Right cardiac atrium (tissue), 5 donors: ENCODE measurements at regions of chr14 and their contacts with region 1.

Region 1: DNA sequence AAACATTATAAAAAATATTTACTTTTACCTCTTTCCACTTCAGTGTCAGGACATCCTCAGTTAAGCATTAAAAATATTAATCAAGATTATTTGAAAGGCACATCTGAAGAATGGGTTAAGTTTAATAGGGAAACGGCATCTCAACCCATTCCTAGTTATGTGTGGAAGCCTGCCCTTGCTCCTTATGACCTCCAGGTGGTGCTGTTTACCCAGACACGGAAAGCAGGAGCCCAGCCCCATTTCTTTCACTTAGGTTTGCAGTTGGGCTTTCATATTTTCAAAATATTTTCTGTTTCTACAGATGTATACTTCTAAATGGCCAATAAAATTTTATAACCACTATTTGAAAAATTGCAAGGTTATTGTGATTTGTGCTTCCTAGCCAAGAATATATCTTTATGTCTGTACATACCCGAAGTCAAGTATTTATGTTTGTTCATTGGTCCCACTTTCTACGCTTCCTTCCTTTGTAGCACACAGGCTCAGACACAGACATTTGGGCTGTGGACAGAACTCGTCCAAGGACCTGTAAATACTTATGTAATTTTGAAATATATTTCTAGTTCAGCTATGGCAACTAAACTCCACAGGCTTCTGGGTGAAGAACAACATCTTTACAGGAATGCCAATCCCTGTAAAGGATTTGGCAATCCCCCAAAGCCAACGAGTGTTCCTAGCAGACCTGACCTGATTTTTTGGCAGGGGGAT is 247.1 kb downstream of the AKAP6 start:
- DNase-seq: peak in 1 of 3 donors; percentile 53
- ATAC-seq: peak; percentile 83 to 86
- H3K4me3 ChIP-seq: peak overlapping the region; percentile 26
- H3K27ac ChIP-seq: no peak overlapping the region
- H3K4me1 ChIP-seq: no peaks in the 10 kb centered on the region
- H3K27me3 ChIP-seq: no peaks in the 10 kb centered on the region

Region 2: DNA sequence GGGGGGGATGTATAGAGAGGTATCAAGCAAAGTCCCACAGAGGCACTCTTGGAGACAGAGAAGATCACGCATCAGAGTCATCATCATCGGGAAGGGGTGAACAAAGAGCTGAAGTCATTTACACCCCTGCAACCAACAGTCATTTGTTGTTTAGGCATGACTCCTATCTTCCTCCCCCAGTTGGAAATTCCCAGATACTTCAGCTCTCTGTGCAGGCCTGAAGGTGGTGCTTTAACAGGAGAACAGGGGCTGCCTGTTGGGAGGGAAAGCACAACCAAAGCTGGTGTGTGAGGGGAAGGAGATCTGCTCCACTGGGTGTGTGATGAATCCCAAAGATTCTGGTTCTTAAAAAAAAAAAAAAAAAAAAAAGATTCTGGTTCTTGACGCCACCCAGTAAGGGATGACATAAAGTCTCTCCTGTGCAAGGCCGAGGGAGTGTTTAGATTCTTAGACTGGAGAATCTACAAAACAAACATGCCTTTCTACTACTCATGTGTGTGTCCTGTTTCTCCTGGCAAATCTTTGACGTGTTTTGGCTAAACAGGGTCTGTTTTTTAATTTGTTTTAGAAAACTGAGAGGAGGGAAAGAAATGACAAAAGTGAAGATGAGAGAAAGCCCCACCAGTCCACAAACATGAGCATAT is 620.2 kb before region 1 on chr14:
- intact Hi-C with region 1: no loop called
- DNase-seq: no peak
- ATAC-seq: no peak
- H3K4me3 ChIP-seq: no peak overlapping the region
- H3K27ac ChIP-seq: no peak overlapping the region
- H3K4me1 ChIP-seq: peaks cover 3% of the 10 kb centered on the region
- H3K27me3 ChIP-seq: no peaks in the 10 kb centered on the region

Region 3: DNA sequence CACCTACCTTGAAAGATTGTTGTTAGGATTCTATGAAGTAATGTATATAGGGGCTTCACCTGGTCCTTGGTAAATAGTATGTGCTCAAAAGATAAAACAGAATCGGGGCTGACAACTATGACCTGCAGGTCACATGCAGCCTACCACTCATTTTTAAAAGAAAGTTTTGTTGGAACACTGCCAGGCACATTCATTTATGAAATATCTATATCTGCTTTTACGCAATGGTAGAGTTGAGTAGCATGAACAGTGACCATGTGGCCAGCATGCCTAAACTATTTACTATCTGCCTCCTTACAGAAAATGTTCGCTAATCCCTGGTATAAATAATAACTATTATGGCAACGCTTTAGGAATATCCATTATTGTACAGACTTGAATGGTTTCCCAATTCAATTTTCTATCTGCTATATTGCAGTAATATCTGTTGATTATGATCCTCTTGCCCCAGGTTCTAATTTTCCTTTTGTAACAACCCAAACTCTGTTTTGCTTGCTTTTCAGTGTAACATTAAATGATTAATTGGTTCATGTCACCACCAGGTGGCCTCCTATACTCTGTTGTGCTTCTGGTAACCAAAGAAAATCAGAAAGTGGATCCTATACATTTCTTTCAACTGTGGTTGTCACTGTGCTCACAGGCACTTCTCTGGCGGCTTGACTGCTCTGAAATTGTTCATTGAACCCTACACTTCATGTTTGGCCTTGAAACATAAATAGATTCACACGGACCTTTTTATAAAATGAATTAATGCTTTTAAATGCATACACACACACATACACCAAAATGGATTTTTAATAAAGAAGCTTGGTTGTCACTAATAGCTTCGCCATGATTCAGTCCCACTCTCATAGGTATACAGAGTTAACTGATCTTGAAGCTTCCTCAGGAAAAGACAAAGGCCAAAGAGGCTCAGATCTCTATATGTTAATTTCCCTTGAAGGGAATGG is 134.8 kb after region 1 on chr14:
- intact Hi-C with region 1: loop called in 1 of 4 experiments (anchors 10 kb)
- DNase-seq: no peak
- ATAC-seq: peak in 1 of 2 donors; percentile 53
- H3K4me3 ChIP-seq: peak overlapping the region; percentile 40
- H3K27ac ChIP-seq: no peak overlapping the region
- H3K4me1 ChIP-seq: peaks cover 2% of the 10 kb centered on the region
- H3K27me3 ChIP-seq: no peaks in the 10 kb centered on the region

Region 4: DNA sequence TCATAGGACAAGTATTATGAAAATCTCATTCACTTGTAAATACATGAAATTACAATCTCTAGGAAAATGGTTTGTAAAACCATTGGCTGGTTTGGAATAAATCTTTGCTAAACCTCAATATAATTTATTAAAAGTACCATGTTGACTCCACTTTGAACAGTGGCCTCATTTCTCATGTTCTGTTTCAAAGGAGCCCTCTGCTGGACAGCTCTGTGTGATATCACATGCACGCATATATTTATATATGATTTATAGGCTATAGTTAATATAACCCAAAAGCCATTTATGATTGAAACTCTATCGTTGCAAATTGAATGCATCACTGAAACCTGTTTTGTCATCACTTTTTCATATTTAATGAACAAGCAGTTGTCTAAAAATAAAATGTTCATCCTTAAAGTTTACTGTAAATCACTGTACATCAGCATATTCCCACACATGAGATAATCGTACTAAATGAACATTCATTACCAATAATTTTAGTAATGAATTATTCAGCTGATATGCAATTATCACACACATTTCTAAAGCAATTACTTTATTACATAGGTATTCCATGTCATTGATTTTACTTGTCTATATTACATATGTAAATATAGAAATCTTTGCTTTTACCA is 856.3 kb after region 1 on chr14:
- intact Hi-C with region 1: loop called in 2 of 4 experiments (anchors 5 to 10 kb)
- DNase-seq: peak in 1 of 3 donors; percentile 39
- ATAC-seq: no peak
- H3K4me3 ChIP-seq: no peak overlapping the region
- H3K27ac ChIP-seq: no peak overlapping the region
- H3K4me1 ChIP-seq: no peaks in the 10 kb centered on the region
- H3K27me3 ChIP-seq: no peaks in the 10 kb centered on the region